HCT116 (cell line): ENCODE measurements at regions of chr19 and their contacts with region 1.

Region 1: GRCh38 chr19:7799640-7800355 is 30.2 kb upstream of the EVI5L start:
- DNase-seq: peak; percentile 76
- ATAC-seq: peak; percentile 81
- H3K4me3 ChIP-seq: peak overlapping the region; percentile 30 to 52
- H3K27ac ChIP-seq: no peak overlapping the region
- H3K4me1 ChIP-seq: peaks cover 11 to 22% of the 10 kb centered on the region in 2 experiments; a peak in 3 of 4 replicates
- H3K27me3 ChIP-seq: no peaks in the 10 kb centered on the region
- CTCF ChIP-seq: peak; percentile 52 to 88 (median 60); a peak in 5 of 6 replicates
- POLR2A ChIP-seq: no peak
- RAD21 ChIP-seq: peak; percentile 77

Region 2: DNA sequence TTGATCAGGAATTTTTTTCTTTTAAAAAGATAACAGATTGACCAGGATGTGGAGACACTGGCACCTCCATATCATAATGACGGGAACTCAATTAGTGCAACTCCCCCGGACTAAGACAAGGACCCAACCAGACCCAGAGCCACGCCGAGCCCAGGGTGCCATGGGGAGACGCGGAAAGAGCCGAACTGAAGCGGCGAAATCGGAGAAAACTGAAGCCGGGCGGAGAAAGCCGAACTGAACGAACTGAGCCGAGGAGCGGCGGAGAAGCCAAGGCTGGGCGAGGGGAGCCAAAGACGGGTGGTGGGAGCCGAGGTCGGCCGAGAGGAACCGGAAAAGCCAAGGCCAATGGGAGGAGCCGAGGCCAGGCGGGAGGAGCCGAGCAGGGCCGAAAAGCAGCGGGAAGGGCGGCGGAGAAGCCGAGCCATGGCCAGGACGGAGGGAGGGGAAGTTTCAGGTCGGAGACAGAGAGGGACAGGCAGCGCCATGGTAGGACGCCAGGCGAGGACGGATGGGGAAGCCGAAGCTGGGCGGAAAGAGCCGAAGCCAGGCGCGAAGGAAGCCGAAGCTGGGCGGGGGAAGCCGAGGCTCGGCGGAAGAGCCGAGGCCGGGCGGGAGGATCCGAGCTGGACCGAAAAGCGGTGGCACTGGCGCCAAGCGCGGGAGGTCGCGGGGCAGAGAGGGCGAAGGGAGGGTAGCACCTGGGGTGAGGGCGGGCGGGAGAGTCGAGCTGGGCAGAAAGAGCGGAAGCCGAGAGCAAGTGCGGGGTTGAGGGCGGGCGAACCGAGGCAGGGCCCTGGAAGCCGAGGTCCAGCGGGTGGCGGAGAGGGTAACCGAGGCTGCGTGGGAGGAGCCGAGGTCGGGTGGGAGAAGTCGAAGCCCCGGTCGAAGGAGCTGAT is 700.8 kb before region 1 on chr19:
- CTCF ChIA-PET with region 1: interaction called, 11 read pairs
- POLR2A ChIA-PET with region 1: no interaction called
- RAD21 ChIA-PET with region 1: no interaction called
- intact Hi-C with region 1: no loop called
- DNase-seq: peak; percentile 79
- ATAC-seq: peak; percentile 94
- H3K4me3 ChIP-seq: peak overlapping the region; percentile 63 to 76
- H3K27ac ChIP-seq: peak overlapping the region; percentile 87
- H3K4me1 ChIP-seq: peaks cover 4 to 18% of the 10 kb centered on the region in 2 experiments; a peak in 3 of 4 replicates
- H3K27me3 ChIP-seq: no peaks in the 10 kb centered on the region
- CTCF ChIP-seq: no peak
- POLR2A ChIP-seq: peak; percentile 47
- RAD21 ChIP-seq: no peak

Region 3: GRCh38 chr19:7355151-7355820 is 444.5 kb before region 1 on chr19:
- CTCF ChIA-PET with region 1: interaction called, 23 read pairs
- POLR2A ChIA-PET with region 1: interaction called, 3 read pairs
- RAD21 ChIA-PET with region 1: no interaction called
- intact Hi-C with region 1: loop called (anchors 1 kb)
- DNase-seq: no peak
- ATAC-seq: no peak
- H3K4me3 ChIP-seq: no peak overlapping the region
- H3K27ac ChIP-seq: no peak overlapping the region; the same call in 1 of the 2 replicates
- H3K4me1 ChIP-seq: peaks cover 0 to 7% of the 10 kb centered on the region in 2 experiments; a peak in 1 of 4 replicates
- H3K27me3 ChIP-seq: no peaks in the 10 kb centered on the region
- CTCF ChIP-seq: no peak
- POLR2A ChIP-seq: no peak
- RAD21 ChIP-seq: no peak

Region 4: GRCh38 chr19:7562646-7563393 is 237.0 kb before region 1 on chr19:
- CTCF ChIA-PET with region 1: interaction called, 88 read pairs
- POLR2A ChIA-PET with region 1: interaction called, 7 read pairs
- RAD21 ChIA-PET with region 1: interaction called, 16 to 28 read pairs
- intact Hi-C with region 1: loop called (anchors 1 kb)
- DNase-seq: no peak
- ATAC-seq: no peak
- H3K4me3 ChIP-seq: no peak overlapping the region
- H3K27ac ChIP-seq: no peak overlapping the region
- H3K4me1 ChIP-seq: no peaks in the 10 kb centered on the region
- H3K27me3 ChIP-seq: no peaks in the 10 kb centered on the region
- CTCF ChIP-seq: no peak
- POLR2A ChIP-seq: no peak
- RAD21 ChIP-seq: no peak

Region 5: DNA sequence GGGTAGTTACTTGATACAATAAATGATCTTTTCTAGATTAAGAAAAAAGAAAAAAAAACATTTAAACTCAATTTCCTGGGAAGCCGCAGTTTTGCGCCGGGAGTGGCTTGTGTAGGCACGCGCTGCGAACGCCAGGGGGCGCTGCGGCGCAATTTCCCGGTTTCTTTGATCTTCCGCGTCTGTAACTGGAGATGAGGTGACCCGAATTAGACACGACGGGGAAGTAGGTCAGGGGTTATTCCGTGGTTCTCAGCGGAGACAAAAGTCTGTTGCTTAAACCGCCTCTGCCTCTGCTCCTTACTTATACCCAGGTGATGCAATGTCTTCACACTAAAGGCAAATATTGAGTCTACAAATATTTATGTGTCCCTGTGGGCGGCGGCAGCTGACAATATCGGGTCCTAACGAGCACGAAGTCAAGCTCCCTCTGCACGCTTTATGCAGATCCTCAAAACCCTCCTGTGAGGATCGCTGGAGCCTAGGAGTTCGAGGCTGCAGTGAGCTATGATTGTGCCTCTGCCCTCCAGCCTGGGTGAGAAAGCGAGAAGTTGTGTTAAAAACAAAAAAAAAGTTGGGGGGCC is 147.6 kb before region 1 on chr19:
- CTCF ChIA-PET with region 1: interaction called, 6 read pairs
- POLR2A ChIA-PET with region 1: no interaction called
- RAD21 ChIA-PET with region 1: no interaction called
- intact Hi-C with region 1: loop called (anchors 1 kb)
- DNase-seq: peak; percentile 74
- ATAC-seq: peak; percentile 83
- H3K4me3 ChIP-seq: peak overlapping the region; percentile 15 to 49
- H3K27ac ChIP-seq: peak overlapping the region; percentile 32; the same call in 1 of the 2 replicates
- H3K4me1 ChIP-seq: peaks cover 3 to 12% of the 10 kb centered on the region in 2 experiments
- H3K27me3 ChIP-seq: no peaks in the 10 kb centered on the region
- CTCF ChIP-seq: peak; percentile 78 to 96 (median 95)
- POLR2A ChIP-seq: no peak
- RAD21 ChIP-seq: no peak; the same call in 1 of the 2 replicates